ENCODE measurements at regions of chr7 and their contacts with region 1.

Region 1: DNA sequence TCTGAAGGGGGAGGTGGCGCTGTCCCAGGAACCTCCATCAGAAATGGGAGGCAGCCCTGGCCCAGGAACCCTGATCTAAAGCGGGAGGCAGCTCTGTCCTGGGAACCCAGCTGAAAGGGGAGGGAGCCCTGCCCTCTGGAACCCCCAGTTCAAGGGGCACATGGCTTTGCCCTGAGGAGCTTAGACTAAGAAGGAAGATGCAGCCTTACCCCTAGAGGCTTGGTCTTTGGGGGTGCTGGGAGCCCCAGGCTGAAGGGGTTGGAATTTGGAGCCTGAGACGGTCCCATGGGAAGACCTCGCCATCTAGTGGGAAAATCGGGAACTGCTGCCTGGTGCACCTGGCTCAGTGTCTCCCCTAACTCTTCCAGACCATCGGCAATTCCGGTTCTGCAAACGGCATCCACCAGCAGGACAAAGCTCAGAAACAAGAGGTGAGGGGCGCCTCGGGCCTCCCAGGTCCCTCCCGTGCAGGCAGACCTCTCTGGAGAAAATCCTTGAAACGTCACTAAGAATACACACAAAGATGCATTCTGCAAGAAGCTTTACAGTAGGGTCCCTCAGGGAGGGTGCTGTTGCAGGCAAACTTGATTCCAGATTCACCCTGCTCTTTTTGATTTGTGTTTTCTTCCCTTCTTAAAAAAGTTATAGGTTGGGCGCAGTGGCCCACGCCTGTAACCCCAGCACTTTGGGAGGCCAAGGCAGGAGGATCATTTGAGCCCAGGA is 52.4 kb upstream of the GTF2IRD1 start:
- DNase-seq: peak; percentile 91
- H3K4me3 ChIP-seq: no peak overlapping the region
- H3K27ac ChIP-seq: no peak overlapping the region
- H3K4me1 ChIP-seq: no peaks in the 10 kb centered on the region
- H3K27me3 ChIP-seq: no peaks in the 10 kb centered on the region
- CTCF ChIP-seq: peak; percentile 100
- EP300 ChIP-seq: no peak
- RAD21 ChIP-seq: peak; percentile 97

Region 2: DNA sequence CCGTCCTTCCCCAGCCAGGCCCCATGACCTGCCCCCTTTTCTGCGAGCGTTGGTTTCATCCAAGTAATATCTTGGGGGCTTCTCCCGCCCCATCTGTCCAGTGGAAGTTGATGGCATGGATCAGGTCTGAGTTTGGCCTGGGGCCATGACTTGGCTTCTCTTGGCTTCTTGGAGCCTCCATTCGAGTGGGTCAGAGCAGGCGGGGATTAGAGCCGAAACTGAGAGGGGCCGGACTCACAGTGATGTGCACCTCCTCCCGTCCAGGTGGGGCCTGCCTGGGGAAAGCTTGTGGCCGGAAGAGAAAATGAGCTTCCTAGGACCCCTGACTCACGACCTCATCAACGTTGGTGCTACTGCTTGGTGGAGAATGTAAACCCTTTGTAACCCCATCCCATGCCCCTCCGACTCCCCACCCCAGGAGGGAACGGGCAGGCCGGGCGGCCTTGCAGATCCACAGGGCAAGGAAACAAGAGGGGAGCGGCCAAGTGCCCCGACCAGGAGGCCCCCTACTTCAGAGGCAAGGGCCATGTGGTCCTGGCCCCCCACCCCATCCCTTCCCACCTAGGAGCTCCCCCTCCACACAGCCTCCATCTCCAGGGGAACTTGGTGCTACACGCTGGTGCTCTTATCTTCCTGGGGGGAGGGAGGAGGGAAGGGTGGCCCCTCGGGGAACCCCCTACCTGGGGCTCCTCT is 332.8 kb before region 1 on chr7:
- CTCF ChIA-PET with region 1: interaction called, 15 read pairs
- POLR2A ChIA-PET with region 1: no interaction called
- DNase-seq: no peak
- H3K4me3 ChIP-seq: no peak overlapping the region
- H3K27ac ChIP-seq: no peak overlapping the region
- H3K4me1 ChIP-seq: no peaks in the 10 kb centered on the region
- H3K27me3 ChIP-seq: no peaks in the 10 kb centered on the region
- CTCF ChIP-seq: no peak
- EP300 ChIP-seq: no peak
- RAD21 ChIP-seq: no peak

Region 3: DNA sequence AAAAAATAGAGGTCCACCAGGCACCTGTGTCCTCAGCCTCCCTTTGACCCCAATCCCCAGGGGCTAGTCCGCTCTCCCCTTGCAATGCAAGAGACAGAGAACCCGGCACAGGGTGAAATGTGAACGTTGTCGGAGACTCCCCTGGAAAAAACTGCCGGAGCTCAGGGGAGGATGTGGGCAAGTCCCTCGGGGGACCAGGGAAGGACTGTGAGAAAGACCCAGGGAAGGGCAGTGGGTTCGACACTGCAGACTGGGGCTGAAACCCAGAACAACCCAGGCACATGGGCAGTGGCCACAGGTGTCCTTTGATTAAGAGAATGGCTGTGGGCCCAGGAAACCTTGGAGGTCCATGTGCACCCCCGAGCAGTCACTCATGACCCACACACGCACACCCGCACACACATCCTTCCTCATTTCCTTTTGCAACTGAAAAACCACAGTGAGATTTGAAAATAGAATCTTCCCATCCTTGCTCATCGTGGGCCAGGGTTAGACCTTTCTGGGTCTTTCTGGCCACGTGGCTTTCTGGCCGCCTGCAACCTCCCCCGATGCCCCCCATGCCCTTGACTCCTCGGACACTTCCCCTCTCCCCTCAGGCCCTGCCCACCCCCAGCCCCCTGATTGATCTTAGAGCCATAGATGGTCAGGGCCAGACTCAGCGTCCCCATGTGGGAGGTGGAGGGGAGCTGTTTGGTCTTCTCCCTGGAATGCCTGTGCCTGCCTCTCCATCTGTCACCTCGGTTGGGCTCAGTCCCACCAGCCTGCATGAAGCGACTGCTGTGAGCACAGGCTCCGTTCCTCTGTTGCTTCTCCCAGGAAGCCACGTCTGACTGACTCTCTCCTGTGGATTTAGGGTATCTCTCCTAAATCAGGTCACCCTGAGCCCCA is 183.6 kb before region 1 on chr7:
- CTCF ChIA-PET with region 1: interaction called, 537 read pairs
- POLR2A ChIA-PET with region 1: no interaction called
- DNase-seq: no peak
- H3K4me3 ChIP-seq: no peak overlapping the region
- H3K27ac ChIP-seq: no peak overlapping the region
- H3K4me1 ChIP-seq: no peaks in the 10 kb centered on the region
- H3K27me3 ChIP-seq: no peaks in the 10 kb centered on the region
- CTCF ChIP-seq: no peak
- EP300 ChIP-seq: no peak
- RAD21 ChIP-seq: no peak

Region 4: DNA sequence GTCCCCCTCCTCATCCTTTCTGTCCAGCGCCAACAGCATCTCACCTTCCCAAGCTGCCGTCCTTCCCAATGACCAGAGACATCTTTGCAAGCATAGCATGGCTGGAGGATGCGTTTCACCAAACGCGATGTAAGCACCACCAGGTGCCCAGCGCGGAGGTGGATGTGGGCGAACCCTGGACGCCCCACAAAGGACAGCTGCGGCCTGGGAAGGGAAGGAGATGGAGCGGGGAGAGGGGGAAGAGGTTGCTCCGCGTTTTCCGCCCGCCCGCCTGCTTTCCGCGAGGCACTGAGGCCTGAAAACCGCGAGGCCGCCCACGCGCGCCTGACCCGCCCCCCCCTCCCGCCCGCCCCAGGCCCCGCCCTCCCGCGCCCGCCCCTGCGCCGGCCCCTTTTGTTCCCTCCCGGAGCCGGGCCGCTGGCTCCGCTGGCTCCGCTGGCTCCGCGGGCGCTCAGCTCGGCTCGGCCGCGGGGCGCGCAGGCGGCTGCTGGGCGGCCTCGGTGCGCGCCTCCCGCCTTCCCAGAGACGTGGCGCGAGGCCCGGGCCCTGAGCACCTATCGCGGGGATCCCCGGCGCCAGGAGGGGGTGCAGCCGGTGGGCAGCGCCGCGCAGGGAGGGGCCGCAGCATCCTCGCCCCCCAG is 112.2 kb before region 1 on chr7 and contains the start of gene CLIP2:
- CTCF ChIA-PET with region 1: interaction called, 57 read pairs
- POLR2A ChIA-PET with region 1: no interaction called
- DNase-seq: peak; percentile 99
- H3K4me3 ChIP-seq: peak within 1 kb of the TSS; percentile 74 to 99
- H3K27ac ChIP-seq: peak within 1 kb of the TSS; percentile 65 to 68; a peak in 3 of 4 replicates
- H3K4me1 ChIP-seq: peaks cover 11 to 28% of the 10 kb centered on the region in 2 experiments; a peak in 3 of 4 replicates
- H3K27me3 ChIP-seq: no peaks in the 10 kb centered on the region
- CTCF ChIP-seq: no peak
- EP300 ChIP-seq: no peak
- RAD21 ChIP-seq: 0 out of 2 replicates have a peak, but pooled peaks have one; percentile 10
- polyA plus RNA-seq, gene CLIP2: 9.6 and 14.3 TPM in 2 replicates

Region 5: DNA sequence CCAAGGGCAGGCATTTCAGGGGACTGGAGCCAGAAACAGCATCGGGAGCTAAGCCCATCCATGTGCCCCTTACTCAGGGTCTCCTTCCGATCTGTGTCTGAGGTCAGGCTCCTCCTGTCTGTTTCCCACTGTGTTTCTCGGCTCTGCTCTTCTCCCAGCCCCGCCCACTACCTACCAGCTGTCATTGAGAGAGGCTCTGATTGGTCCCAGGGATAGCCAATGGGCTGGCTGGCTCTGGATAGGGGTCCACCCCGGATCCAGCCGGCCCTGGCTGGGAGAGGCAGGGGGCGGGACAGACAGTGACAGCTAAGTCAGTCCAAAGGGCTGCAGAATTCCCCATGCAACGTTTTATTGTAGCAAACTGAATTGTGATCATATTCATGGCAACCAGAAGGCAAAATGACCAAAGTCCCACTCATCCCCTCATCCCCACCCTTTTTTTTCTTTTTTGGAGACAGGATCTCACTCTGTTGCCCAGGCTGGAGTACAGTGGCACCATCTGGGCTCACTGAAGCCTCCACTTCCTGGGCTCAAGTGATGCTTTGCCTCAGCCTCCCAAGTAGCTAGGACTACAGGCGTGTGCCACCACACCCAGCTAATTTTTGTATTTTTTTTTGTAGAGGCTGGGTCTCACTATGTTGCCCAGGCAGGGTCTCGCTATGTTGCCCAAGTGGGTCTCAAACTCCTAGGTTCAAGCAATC is 35.8 kb before region 1 on chr7:
- CTCF ChIA-PET with region 1: interaction called, 47 read pairs
- POLR2A ChIA-PET with region 1: no interaction called
- DNase-seq: peak; percentile 100
- H3K4me3 ChIP-seq: no peak overlapping the region
- H3K27ac ChIP-seq: peak overlapping the region in 1 of 2 experiments; percentile 47; a peak in 2 of 4 replicates
- H3K4me1 ChIP-seq: peaks cover 0 to 4% of the 10 kb centered on the region in 2 experiments; a peak in 1 of 4 replicates
- H3K27me3 ChIP-seq: no peaks in the 10 kb centered on the region
- CTCF ChIP-seq: no peak
- EP300 ChIP-seq: no peak
- RAD21 ChIP-seq: no peak

Region 6: GRCh38 chr7:74417419-74417971 is 16.2 kb after region 1 on chr7:
- CTCF ChIA-PET with region 1: interaction called, 53 read pairs
- POLR2A ChIA-PET with region 1: no interaction called
- DNase-seq: peak; percentile 97
- H3K4me3 ChIP-seq: peak overlapping the region in 1 of 2 experiments; percentile 6; a peak in 1 of 4 replicates
- H3K27ac ChIP-seq: no peak overlapping the region
- H3K4me1 ChIP-seq: peaks cover 0 to 3% of the 10 kb centered on the region in 2 experiments; a peak in 1 of 4 replicates
- H3K27me3 ChIP-seq: no peaks in the 10 kb centered on the region
- CTCF ChIP-seq: peak; percentile 99
- EP300 ChIP-seq: no peak
- RAD21 ChIP-seq: peak; percentile 100

Region 7: DNA sequence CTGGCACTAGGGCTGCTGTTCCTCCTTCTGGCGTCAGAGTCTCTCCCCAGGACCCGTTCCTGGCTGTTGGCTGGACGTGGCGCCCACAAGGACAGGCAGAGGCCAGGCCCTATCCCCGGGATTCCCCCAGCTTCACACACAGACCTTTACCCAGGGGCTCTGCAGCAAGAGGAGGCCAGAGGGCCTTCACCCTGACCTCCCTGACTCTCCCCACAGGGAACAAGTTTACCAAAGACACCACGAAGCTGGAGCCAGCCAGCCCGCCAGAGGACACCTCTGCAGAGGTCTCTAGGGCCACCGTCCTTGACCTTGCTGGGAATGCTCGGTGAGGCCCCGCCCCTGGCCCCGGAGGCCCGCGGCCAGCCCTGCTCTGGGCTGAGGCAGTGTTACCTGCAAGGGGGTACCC is 134.7 kb after region 1 on chr7:
- CTCF ChIA-PET with region 1: no interaction called
- POLR2A ChIA-PET with region 1: no interaction called
- DNase-seq: no peak
- H3K4me3 ChIP-seq: no peak overlapping the region
- H3K27ac ChIP-seq: no peak overlapping the region
- H3K4me1 ChIP-seq: no peaks in the 10 kb centered on the region
- H3K27me3 ChIP-seq: no peaks in the 10 kb centered on the region
- CTCF ChIP-seq: no peak
- EP300 ChIP-seq: no peak
- RAD21 ChIP-seq: no peak

Measured in SK-N-SH (cell line).